Natural killer cell (primary cell): ENCODE measurements at regions of chr3 and their contacts with region 1.

Region 1: DNA sequence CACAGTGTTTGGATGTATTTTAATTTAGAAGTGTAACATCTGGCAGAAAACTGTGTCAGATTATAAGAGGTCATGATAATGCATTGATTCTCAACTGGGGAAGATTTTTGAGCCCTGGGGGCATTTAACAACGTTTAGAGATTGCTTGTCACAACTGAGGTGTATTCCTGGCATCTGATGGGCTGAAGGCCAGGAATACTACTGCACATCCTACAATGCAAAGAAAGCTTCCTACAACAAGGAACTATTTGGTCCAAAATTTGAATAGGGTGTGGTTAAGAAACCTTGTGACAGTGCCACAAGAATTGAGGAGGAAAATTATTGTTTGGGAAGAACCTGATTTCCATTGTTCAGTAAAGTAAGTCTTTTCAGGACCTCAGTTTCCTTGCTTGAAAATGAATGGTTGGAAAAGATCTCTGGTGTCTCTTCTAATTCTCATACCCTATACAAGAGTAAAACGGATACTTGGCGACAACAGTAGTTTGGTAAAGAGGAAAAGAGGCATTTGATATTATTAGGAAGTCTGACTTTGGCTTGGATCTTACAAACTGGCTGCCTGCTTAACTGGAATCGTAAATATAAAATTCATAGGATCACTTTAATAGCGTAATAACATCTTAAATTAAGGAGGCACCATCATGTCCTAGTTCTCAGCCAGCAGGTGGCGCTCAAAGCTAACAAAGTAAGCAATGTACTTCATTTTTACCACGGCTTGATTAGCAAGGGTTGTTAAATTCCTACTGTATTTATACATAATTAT is 4.3 kb downstream of the DAZL start:
- DNase-seq: peak; percentile 75 to 93
- ATAC-seq: peak; percentile 63 to 75 (median 74)
- H3K4me3 ChIP-seq: no peak overlapping the region
- H3K4me3 Mint-ChIP-seq: no peak overlapping the region
- H3K27ac ChIP-seq: no peak overlapping the region
- H3K27ac Mint-ChIP-seq: no peak overlapping the region
- H3K4me1 ChIP-seq: no peaks in the 10 kb centered on the region
- H3K4me1 Mint-ChIP-seq: peaks cover 0 to 7% of the 10 kb centered on the region in 2 donors
- H3K27me3 ChIP-seq: no peaks in the 10 kb centered on the region
- H3K27me3 Mint-ChIP-seq: peaks cover 5 to 21% of the 10 kb centered on the region in 2 donors
- CTCF ChIP-seq: peak; percentile 92

Region 2: DNA sequence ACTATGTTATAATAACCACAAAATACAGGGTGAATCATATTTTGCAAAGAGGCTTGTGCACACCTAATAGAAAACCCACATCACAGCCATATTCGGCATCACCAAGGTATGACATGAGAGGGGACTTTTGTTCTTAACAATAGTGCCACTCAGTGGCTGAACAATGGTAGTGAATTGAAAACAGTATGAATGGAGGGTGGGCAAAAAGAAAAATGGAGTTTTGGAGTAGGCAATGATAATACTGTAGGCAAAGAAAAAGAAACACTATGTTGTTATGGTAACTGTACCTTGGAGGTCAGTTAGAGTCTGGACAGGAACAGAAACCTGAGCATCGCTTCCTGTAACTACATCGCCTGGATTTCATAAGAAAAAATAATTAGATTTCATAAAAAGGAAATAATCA is 632.4 kb after region 1 on chr3:
- intact Hi-C with region 1: loop called (anchors 1 kb)
- DNase-seq: peak in 1 of 2 donors; percentile 79
- ATAC-seq: peak; percentile 88 to 100 (median 99)
- H3K4me3 ChIP-seq: no peak overlapping the region
- H3K4me3 Mint-ChIP-seq: no peak overlapping the region
- H3K27ac ChIP-seq: no peak overlapping the region
- H3K27ac Mint-ChIP-seq: no peak overlapping the region
- H3K4me1 ChIP-seq: no peaks in the 10 kb centered on the region
- H3K4me1 Mint-ChIP-seq: peaks cover 0 to 9% of the 10 kb centered on the region in 2 donors
- H3K27me3 ChIP-seq: no peaks in the 10 kb centered on the region
- H3K27me3 Mint-ChIP-seq: no peaks in the 10 kb centered on the region
- CTCF ChIP-seq: peak; percentile 86

Region 3: DNA sequence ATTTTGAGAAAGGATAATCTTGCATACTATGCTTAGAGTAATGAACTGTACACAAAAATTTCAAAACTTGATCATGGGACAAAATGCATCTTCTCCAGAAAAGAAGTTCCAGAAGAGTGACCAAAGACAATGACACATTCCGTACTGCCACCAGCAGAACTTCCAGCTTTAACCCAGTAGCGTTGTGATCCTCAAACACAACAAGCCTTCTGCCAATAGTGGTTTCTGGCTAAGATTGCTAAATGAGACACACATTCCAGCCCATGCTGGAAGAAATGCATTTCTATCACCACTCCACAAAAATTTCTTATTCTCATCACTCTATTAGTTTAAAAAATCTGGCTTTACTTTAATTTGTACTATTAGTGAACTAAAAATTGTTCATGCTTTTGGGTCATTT is 806.6 kb after region 1 on chr3:
- intact Hi-C with region 1: loop called (anchors 1 kb)
- DNase-seq: no peak
- ATAC-seq: no peak
- H3K4me3 ChIP-seq: no peak overlapping the region
- H3K4me3 Mint-ChIP-seq: no peak overlapping the region
- H3K27ac ChIP-seq: no peak overlapping the region
- H3K27ac Mint-ChIP-seq: no peak overlapping the region
- H3K4me1 ChIP-seq: no peaks in the 10 kb centered on the region
- H3K4me1 Mint-ChIP-seq: no peaks in the 10 kb centered on the region
- H3K27me3 ChIP-seq: no peaks in the 10 kb centered on the region
- H3K27me3 Mint-ChIP-seq: no peaks in the 10 kb centered on the region
- CTCF ChIP-seq: no peak

Region 4: GRCh38 chr3:17412950-17413530 is 812.1 kb after region 1 on chr3:
- intact Hi-C with region 1: loop called (anchors 1 kb)
- DNase-seq: peak in 1 of 2 donors; percentile 71
- ATAC-seq: peak; percentile 53 to 76 (median 69)
- H3K4me3 ChIP-seq: no peak overlapping the region
- H3K4me3 Mint-ChIP-seq: no peak overlapping the region
- H3K27ac ChIP-seq: no peak overlapping the region
- H3K27ac Mint-ChIP-seq: no peak overlapping the region
- H3K4me1 ChIP-seq: no peaks in the 10 kb centered on the region
- H3K4me1 Mint-ChIP-seq: no peaks in the 10 kb centered on the region
- H3K27me3 ChIP-seq: no peaks in the 10 kb centered on the region
- H3K27me3 Mint-ChIP-seq: no peaks in the 10 kb centered on the region
- CTCF ChIP-seq: peak; percentile 82